ENCODE measurements at regions of chr6 and their contacts with region 1.

Region 1: DNA sequence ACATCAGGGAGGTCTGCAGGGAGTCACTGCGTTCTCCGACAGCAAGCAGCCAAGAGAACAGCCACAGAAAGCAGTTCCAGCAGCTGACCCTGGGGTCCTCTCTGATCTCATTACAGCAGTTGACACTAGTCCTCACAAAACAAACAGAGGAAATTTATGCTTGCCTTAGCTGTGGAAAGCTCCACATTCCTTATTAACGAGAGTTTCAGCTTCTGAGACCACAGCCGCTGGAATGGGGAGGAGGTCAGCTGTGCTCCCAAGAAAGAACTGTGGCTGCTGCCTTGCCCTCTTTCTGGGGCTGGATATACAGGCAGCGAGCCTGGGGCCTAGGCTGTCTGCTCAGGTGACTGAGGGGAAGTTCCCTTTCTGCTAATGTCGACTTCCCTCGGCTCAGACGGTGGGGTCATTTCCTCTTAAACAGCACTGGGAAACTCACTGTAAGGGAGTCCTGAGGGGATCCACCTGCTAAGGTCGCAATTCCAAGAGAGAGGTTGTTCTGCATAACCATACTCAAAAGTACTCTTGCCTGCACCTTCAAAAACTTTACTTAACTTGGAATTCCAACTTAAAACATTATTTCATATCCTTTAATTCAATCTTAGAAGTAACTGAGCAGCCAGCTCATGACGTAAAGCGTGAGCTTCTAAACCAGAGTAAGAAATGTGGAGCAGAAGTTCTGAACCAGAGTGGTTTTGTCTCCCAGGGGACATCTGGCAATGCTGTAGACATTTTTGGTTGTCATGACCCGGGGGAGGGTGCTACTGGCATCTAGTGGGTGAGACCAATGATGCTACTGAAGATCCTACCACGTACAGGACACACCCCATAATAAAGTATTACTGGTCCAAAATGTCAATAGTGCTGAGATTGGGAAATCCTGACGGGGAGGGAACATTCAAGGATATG is 80.3 kb downstream of the BACH2 start:
- DNase-seq: peak; percentile 76
- H3K4me3 Mint-ChIP-seq: peak overlapping the region; percentile 14
- H3K27ac Mint-ChIP-seq: no peak overlapping the region
- H3K4me1 Mint-ChIP-seq: peaks cover 32% of the 10 kb centered on the region
- H3K27me3 Mint-ChIP-seq: no peaks in the 10 kb centered on the region

Region 2: DNA sequence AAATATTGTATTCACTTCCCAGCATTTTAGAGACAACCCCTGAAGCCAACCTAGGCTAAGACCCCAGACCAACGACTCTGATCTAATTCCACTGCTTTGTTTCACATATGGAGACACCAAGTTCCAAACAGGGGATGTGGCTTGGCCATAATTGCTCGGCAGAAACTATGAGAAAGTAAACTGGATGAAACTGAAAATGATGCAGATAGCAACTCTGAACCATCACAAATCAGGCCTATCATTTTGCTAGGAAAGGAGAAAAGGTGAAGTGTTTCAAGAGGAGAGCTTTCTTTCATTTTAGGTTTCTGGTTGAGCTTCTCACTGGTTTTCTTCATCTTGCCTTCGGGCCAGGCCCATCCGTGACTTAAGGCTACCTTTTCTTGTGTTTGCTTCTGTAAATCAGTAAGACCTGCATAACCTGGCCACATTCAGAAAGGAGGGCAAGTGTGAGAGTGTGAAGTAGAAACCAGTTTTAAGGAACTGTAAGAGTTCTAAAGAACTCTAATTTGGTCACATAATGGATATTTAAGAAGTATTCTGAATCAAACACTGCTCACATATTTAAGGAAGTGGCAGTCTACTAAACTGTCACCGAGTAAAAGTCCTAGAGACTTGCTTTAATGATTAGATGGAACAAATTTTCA is 25.5 kb before region 1 on chr6:
- CTCF ChIA-PET with region 1: interaction called, 5 read pairs
- intact Hi-C with region 1: loop called (anchors 1 kb)
- DNase-seq: peak; percentile 39
- H3K4me3 Mint-ChIP-seq: peak overlapping the region; percentile 2
- H3K27ac Mint-ChIP-seq: peak overlapping the region; percentile 69
- H3K4me1 Mint-ChIP-seq: peaks cover 90% of the 10 kb centered on the region
- H3K27me3 Mint-ChIP-seq: no peaks in the 10 kb centered on the region

Region 3: DNA sequence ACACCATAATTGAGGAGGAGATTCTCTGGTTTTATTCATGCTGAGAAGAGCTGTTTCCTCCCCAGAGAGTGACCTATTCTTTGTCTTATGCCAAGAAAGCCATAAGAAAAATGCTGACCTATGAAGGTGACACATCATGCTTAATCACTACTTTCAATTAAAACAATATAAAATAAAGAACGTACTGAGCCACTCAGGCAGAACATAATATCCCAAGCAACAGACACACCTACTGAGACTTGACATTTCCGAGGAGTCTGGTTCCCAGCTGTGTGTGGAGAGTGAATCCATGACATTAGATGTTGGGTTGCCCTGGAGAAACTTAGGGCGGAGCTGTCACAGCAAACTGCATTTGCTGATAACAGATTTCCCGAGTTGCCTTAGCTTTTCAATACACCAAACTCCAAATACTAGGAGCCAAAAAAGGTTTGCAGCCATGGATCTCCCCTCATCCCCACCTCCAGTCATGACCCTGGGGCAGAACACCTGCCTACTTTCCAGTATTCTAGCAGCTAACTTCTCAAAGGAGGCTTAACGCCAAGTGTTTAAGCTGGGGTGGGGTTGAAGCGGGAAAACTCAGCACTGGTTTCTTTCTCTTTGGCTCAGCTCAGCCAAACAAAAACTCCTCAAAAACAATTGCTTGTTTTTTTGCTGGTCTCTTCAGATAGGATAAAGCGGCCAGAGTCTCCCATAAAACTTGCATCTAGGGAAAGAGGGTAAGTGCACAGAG is 11.8 kb before region 1 on chr6:
- CTCF ChIA-PET with region 1: interaction called, 11 read pairs
- intact Hi-C with region 1: loop called (anchors 1 kb)
- DNase-seq: no peak
- H3K4me3 Mint-ChIP-seq: no peak overlapping the region
- H3K27ac Mint-ChIP-seq: no peak overlapping the region
- H3K4me1 Mint-ChIP-seq: peaks cover 79% of the 10 kb centered on the region
- H3K27me3 Mint-ChIP-seq: no peaks in the 10 kb centered on the region

Region 4: DNA sequence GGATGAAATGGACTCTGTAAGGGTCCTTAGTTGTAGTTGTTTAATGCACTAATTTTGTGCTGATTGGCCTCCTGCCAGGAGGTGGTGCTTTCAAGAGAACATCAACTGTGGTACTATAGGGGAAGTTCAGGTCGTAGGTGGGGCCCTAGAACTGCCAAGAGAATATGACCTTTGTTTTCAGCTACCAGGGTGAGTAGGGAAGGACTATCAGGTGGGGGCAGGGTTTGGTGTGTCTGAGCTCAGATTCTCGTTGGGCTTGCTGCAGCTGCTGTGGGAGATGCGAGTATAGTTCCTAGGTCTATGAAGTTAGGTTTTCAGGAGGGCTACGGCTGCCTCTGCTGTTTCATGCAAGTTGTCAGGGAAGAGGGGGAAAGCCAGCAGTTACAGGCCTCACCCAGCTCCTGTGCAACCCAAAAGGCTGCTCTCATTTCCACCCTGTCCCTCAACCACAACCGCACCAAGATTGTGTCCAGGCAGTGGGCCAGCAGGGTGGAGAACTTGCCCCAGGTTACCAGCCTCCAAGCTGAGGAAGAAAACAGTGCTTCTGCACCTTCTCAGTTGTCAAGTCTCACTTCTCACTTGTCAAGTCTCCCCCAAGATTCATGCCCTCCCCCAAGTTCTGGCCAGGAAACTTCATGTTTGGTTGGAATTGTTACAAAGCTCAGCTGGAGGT is 997.0 kb after region 1 on chr6:
- CTCF ChIA-PET with region 1: no interaction called
- intact Hi-C with region 1: no loop called
- DNase-seq: no peak
- H3K4me3 Mint-ChIP-seq: no peak overlapping the region
- H3K27ac Mint-ChIP-seq: no peak overlapping the region
- H3K4me1 Mint-ChIP-seq: no peaks in the 10 kb centered on the region
- H3K27me3 Mint-ChIP-seq: no peaks in the 10 kb centered on the region